Mammary epithelial cell (primary cell): ENCODE measurements at regions of chr16 and their contacts with region 1.

Region 1: DNA sequence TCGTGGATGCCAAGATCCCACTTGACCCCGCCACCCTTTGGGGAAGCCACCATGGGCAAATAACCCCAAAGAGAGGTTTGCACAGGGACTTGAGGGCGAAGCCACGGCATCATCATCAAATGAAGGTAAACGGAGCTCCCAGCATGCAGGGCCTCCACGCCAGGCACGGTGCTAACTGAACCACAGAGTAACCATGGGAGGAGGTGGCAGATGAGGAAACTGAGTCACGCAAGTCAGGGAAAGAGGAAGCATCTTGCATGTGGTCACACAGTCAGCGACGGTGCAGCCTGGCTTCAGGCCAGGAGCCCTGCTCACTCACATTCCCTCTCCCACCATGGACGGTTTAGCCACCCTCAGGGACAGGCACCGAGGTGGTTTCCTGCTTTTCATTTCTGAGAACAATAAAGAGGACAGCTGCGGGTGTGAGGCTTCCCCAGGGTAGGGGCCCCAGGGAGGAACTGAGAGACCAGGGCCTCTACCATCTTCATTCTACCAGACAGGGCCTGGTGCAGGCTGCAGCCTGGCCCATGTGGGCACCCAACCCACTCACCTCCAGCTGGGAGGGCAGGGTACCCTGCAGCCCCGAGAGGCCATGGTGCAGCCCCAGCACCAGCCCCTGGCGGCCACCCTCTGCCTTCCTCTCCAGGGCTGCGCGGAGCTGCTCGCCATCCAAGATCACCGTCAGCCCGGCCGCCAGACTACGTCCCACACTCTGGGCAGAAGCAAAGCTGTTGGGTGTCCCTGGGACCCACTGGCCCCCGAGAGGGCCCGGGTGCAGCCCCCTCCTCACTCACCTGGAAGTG is 78.3 kb downstream of the RMI2 start:
- DNase-seq: no peak
- H3K4me3 ChIP-seq: no peak overlapping the region
- H3K27ac ChIP-seq: no peak overlapping the region
- H3K4me1 ChIP-seq: no peaks in the 10 kb centered on the region
- H3K27me3 ChIP-seq: no peaks in the 10 kb centered on the region
- CTCF ChIP-seq: no peak

Region 2: DNA sequence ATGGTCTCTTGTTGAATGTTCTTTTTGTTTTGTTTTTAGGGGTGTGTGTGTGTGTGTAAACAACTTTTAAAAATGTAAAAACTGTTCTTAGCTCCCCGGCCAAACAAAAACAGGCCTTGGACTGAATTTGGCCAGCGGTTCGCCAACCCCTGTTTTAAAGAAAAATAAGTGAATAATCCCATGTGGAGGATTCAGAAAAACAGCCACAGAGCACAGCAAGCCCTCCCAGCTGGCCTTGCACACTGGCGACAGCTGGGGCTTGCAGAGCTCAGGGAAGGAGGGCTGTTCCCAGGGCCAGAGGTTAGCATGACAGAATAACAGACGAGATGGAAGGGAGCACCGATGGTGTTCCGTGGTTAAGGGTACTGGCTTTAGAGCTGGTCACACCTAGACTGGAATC is 882.1 kb before region 1 on chr16:
- CTCF ChIA-PET with region 1: no interaction called
- dilution Hi-C with region 1: no loop called
- in situ Hi-C with region 1: no loop called
- intact Hi-C with region 1: no loop called
- DNase-seq: no peak
- H3K4me3 ChIP-seq: no peak overlapping the region
- H3K27ac ChIP-seq: no peak overlapping the region
- H3K4me1 ChIP-seq: peaks cover 11% of the 10 kb centered on the region
- H3K27me3 ChIP-seq: no peaks in the 10 kb centered on the region
- CTCF ChIP-seq: no peak

Region 3: GRCh38 chr16:11345040-11345862 is 78.3 kb before region 1 on chr16 and contains the start of gene RMI2:
- CTCF ChIA-PET with region 1: no interaction called
- dilution Hi-C with region 1: no loop called
- in situ Hi-C with region 1: no loop called
- intact Hi-C with region 1: no loop called
- DNase-seq: peak; percentile 93
- H3K4me3 ChIP-seq: peak within 1 kb of the TSS; percentile 63 to 73 (median 67)
- H3K27ac ChIP-seq: peak within 1 kb of the TSS; percentile 33
- H3K4me1 ChIP-seq: peaks cover 8% of the 10 kb centered on the region
- H3K27me3 ChIP-seq: no peaks in the 10 kb centered on the region
- CTCF ChIP-seq: no peak
- total RNA-seq, gene RMI2: 2.2 to 14.7 TPM

Region 4: DNA sequence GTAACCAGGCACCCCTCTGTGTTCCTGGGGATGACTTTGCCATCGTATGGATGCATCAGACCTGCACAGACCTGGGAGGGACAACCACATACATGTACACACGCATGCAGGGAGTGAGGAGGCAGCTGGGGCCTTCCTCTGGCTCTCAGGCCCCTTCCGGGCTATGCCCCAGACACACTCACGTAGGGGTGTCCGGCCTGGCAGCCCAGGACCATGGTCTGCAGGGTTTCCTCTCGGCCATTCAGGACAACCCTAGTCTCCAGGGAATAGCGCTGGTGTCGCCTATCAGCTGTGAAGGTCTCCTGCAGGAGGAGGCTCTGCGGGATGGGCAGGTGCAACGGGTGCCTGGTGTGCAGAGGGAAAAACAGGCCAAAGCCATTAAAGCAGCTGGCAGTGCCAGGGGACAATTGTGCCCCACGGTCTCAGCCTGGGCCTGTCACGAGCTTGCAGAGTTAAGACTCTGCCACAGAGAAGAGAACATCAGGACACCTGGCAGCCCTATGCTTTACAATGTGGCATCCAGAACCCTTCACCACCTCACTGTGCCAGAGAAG is 23.1 kb after region 1 on chr16:
- CTCF ChIA-PET with region 1: no interaction called
- dilution Hi-C with region 1: no loop called
- in situ Hi-C with region 1: no loop called
- intact Hi-C with region 1: loop called (anchors 2 kb)
- DNase-seq: no peak
- H3K4me3 ChIP-seq: no peak overlapping the region
- H3K27ac ChIP-seq: no peak overlapping the region
- H3K4me1 ChIP-seq: no peaks in the 10 kb centered on the region
- H3K27me3 ChIP-seq: no peaks in the 10 kb centered on the region
- CTCF ChIP-seq: no peak

Region 5: DNA sequence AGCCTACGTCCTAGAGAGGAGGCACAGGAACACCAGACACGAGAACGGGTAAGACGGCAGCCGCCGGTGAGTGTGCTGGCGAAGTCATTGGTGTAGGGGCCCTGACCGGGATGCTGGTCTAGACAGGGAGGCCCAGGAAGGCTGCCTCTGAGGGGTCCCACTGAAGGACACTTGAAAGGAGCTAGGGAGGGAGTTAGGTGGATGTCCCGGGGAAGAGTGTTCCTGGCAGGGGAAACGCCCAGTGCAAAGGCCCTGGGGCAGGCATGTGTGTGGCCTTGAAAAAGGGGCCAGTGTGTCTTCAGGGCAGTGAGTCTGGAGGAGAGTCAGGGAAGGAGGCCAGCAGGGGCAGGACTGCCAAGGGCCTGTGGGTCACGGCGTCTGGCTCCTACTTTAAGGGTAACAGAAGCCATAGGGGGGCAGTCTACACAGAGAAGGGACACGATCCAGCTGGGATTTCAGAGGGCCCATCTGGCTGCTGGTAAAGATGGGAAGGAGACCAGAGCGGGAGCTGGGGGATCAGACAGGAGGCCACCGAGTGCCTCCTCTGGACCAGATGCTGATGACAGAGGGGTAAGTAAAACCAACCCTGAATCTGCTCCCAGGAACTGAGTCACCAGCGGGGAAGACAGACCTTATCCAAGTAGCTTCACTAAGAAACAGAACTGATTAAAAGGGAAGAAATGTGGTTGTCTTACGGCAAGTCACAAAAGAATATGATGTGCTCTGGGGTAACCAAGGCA is 47.3 kb after region 1 on chr16:
- CTCF ChIA-PET with region 1: no interaction called
- dilution Hi-C with region 1: no loop called
- in situ Hi-C with region 1: no loop called
- intact Hi-C with region 1: loop called (anchors 10 kb)
- DNase-seq: no peak
- H3K4me3 ChIP-seq: no peak overlapping the region
- H3K27ac ChIP-seq: no peak overlapping the region
- H3K4me1 ChIP-seq: no peaks in the 10 kb centered on the region
- H3K27me3 ChIP-seq: no peaks in the 10 kb centered on the region
- CTCF ChIP-seq: no peak

Region 6: DNA sequence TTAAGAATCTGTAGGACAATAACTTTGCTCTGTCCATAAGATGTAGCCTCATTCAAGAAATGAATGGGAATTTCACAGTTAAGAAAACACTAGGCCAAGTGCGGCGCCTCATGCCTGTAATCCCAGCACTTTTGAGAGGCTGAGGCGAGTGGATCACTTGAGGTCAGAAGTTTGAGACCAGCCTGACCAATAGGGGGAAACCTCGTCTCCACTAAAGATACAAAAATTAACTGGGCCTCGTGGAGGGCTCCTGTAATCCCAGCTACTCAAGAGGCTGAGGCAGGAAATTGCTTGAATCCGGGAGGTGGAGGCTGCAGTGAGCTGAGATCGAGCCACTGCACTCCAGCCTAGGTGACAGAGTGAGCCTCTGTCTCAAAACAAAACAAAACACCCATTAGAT is 447.7 kb after region 1 on chr16:
- CTCF ChIA-PET with region 1: no interaction called
- dilution Hi-C with region 1: no loop called
- in situ Hi-C with region 1: no loop called
- intact Hi-C with region 1: no loop called
- DNase-seq: no peak
- H3K4me3 ChIP-seq: no peak overlapping the region
- H3K27ac ChIP-seq: no peak overlapping the region
- H3K4me1 ChIP-seq: peaks cover 14% of the 10 kb centered on the region
- H3K27me3 ChIP-seq: no peaks in the 10 kb centered on the region
- CTCF ChIP-seq: no peak